Sciatic nerve (tissue), 2 donors: ENCODE measurements at regions of chr2 and their contacts with region 1.

Region 1: GRCh38 chr2:230007931-230008707 is 60.6 kb downstream of the SLC16A14 start:
- DNase-seq: peak; percentile 88
- ATAC-seq: peak; percentile 53

Region 2: GRCh38 chr2:228700638-228701037 is 1307.5 kb before region 1 on chr2:
- intact Hi-C with region 1: no loop called
- DNase-seq: no peak
- ATAC-seq: no peak

Region 3: DNA sequence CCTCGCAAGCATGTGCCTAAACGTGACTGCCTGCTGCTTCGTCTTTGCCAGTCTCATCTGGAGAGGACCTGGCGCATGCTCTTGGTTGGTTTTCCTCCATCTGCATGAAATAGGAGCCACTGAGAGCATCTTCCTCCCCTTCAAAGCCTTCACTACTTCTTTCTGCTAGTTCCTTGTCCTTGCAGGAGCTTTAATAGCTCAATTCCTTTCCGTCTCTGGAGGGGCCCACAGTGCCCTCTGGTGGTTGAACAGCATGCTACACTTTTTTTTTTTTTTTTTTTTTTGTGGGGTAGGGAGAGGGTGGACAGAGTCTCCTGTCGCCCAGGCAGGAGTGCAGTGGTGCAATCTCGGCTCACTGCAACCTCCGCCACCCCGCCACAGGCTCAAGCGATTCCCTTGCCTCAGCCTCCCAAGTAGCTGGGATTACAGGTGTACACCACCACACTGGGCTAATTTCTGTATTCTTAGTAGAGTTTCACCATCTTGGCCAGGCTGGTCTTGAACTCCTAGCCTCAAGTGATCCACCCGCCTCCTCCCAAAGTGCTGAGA is 152.1 kb after region 1 on chr2:
- intact Hi-C with region 1: loop called (anchors 5 kb)
- DNase-seq: no peak
- ATAC-seq: peak; percentile 51